Caco-2 (cell line): ENCODE measurements at regions of chr12 and their contacts with region 1.

Region 1: DNA sequence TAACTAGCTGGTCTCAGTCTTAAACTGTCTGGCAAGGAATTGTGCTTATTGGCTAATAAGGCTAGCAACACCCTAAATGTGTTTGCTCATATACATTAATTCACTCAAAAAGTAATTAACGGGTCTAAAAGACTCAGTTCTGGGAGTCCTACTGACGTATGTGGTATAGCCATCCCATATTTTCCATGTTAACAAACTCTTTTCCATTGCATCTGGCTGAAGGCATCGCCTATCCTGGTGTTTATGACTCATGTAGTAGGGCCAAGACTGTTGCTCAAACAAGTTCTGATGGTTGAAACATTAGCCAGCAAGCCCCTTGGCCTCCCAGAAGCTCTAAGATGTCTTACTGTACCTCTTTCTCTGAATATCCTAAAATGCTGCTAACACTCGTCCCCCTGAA is 98.5 kb downstream of the PHLDA1 start:
- DNase-seq: no peak
- H3K4me3 ChIP-seq: no peak overlapping the region
- H3K4me3 Mint-ChIP-seq: no peak overlapping the region
- H3K27ac Mint-ChIP-seq: no peak overlapping the region
- H3K4me1 ChIP-seq: peaks cover 43% of the 10 kb centered on the region
- H3K4me1 Mint-ChIP-seq: peaks cover 8% of the 10 kb centered on the region
- H3K27me3 ChIP-seq: no peaks in the 10 kb centered on the region
- H3K27me3 Mint-ChIP-seq: no peaks in the 10 kb centered on the region
- CTCF ChIP-seq: no peak

Region 2: DNA sequence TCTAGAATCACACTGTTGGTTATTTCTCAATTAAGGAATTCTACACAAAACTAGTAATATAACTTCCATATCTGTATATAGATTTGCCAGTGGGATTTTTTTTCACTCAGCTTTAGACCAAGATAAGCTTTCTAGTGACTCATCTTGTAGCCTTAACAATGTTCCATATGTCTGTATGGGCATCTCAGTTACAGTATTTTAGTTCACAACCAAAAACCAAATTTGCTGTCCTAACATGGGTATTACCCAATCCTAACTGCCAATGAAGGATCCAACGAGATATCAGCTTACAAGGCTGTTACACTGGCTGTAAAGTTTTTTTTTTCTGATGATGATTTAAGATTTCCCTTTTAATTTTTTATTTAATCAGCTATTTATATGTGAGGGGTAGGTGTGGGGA is 390.2 kb before region 1 on chr12:
- CTCF ChIA-PET with region 1: interaction called, 10 read pairs
- POLR2A ChIA-PET with region 1: no interaction called
- intact Hi-C with region 1: no loop called
- DNase-seq: no peak
- H3K4me3 ChIP-seq: no peak overlapping the region
- H3K4me3 Mint-ChIP-seq: no peak overlapping the region
- H3K27ac Mint-ChIP-seq: no peak overlapping the region
- H3K4me1 ChIP-seq: no peaks in the 10 kb centered on the region
- H3K4me1 Mint-ChIP-seq: no peaks in the 10 kb centered on the region
- H3K27me3 ChIP-seq: no peaks in the 10 kb centered on the region
- H3K27me3 Mint-ChIP-seq: no peaks in the 10 kb centered on the region
- CTCF ChIP-seq: no peak